Gastrocnemius medialis (tissue), 4 donors: ENCODE measurements at regions of chr12 and their contacts with region 1.

Region 1: DNA sequence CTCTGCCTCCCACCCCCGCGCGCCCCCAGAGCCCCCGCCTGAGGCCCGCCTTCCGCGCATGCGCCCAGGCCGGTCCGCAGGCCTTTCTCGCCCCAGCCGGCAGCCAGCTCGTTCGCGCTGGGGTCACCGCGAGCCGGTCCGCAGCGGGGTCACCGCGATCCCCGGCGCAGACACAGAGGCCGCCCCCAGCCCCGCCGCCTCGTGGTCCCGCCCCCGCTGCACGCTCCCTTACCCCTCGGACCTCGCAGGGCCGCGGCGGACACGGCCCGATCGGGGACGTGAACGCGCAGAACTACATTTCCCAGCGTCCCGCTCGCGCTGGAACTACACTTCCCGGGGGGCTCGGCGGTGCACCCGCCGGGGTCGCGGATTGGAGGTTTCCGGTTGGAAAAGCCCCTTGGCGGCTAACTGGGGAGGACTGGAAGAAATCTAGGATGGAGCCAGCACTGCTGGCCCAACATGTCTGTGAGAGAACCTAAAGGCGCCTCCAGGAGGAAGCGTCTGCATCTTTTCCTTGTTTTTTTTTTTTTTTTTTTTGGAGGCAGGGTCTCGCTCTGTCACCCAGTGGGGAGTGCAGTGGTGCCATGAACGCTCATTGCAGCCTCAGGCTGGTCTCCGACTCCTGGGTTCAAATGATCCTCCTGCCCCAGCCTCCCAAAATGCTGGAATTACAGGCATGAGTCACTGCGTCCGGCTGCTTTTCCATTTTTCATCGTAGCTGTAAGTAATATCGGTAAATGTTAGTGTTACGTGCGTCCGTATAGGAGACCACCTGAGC is at the start of gene ZNF605:
- DNase-seq: peak; percentile 70 to 78
- ATAC-seq: peak; percentile 94 to 97
- H3K4me3 ChIP-seq: peak within 1 kb of the TSS; percentile 85 to 99 (median 88)
- H3K27ac ChIP-seq: peak within 1 kb of the TSS; percentile 82 to 96 (median 94)
- H3K4me1 ChIP-seq: peaks cover 9 to 20% of the 10 kb centered on the region in 2 donors
- H3K27me3 ChIP-seq: no peaks in the 10 kb centered on the region
- CTCF ChIP-seq: no peak
- POLR2A ChIP-seq: peak in 1 of 2 donors; percentile 30
- total RNA-seq, gene ZNF605: 2.1 to 4.6 (median 2.2) TPM

Region 2: GRCh38 chr12:132828706-132829534 is 127.3 kb before region 1 on chr12 and contains the start of gene GOLGA3:
- in situ Hi-C with region 1: no loop called
- intact Hi-C with region 1: loop called (anchors 5 kb)
- DNase-seq: peak; percentile 85 to 88
- ATAC-seq: peak; percentile 97 to 98
- H3K4me3 ChIP-seq: peak within 1 kb of the TSS; percentile 78 to 87 (median 84)
- H3K27ac ChIP-seq: peak within 1 kb of the TSS; percentile 92 to 100 (median 97)
- H3K4me1 ChIP-seq: peaks cover 15 to 22% of the 10 kb centered on the region in 2 donors
- H3K27me3 ChIP-seq: no peaks in the 10 kb centered on the region
- CTCF ChIP-seq: peak in 1 of 5 experiments; percentile 20
- POLR2A ChIP-seq: peak; percentile 40 to 54
- total RNA-seq, gene GOLGA3: 30.0 to 50.0 (median 39.6) TPM

Region 3: GRCh38 chr12:132887513-132888351 is 68.5 kb before region 1 on chr12 and contains the start of gene CHFR:
- in situ Hi-C with region 1: no loop called
- intact Hi-C with region 1: loop called (anchors 5 kb)
- DNase-seq: peak; percentile 84 to 91
- ATAC-seq: peak; percentile 97
- H3K4me3 ChIP-seq: peak within 1 kb of the TSS; percentile 73 to 91 (median 84)
- H3K27ac ChIP-seq: peak within 1 kb of the TSS; percentile 85 to 93 (median 91)
- H3K4me1 ChIP-seq: peaks cover 4 to 7% of the 10 kb centered on the region in 2 donors
- H3K27me3 ChIP-seq: no peaks in the 10 kb centered on the region
- CTCF ChIP-seq: no peak
- POLR2A ChIP-seq: peak; percentile 44 to 54
- total RNA-seq, gene CHFR: 10.8 to 19.6 (median 12.1) TPM

Region 4: GRCh38 chr12:132986001-132986912 is 30.1 kb after region 1 on chr12 and contains the start of gene ZNF26:
- in situ Hi-C with region 1: no loop called
- intact Hi-C with region 1: loop called (anchors 1 kb)
- DNase-seq: peak; percentile 81 to 86
- ATAC-seq: peak; percentile 99 to 100
- H3K4me3 ChIP-seq: peak within 1 kb of the TSS; percentile 77 to 98 (median 88)
- H3K27ac ChIP-seq: peak within 1 kb of the TSS; percentile 86 to 88 (median 87)
- H3K4me1 ChIP-seq: peaks cover 12 to 13% of the 10 kb centered on the region in 2 donors
- H3K27me3 ChIP-seq: no peaks in the 10 kb centered on the region
- CTCF ChIP-seq: no peak
- POLR2A ChIP-seq: peak; percentile 30 to 50
- total RNA-seq, gene ZNF26: 1.2 to 12.3 (median 2.6) TPM

Region 5: GRCh38 chr12:133037207-133038005 is 81.2 kb after region 1 on chr12 and contains the start of gene ZNF84:
- in situ Hi-C with region 1: no loop called
- intact Hi-C with region 1: loop called (anchors 1 kb)
- DNase-seq: peak; percentile 93 to 94
- ATAC-seq: peak; percentile 96 to 99
- H3K4me3 ChIP-seq: peak within 1 kb of the TSS; percentile 74 to 90 (median 80)
- H3K27ac ChIP-seq: peak within 1 kb of the TSS; percentile 83 to 97 (median 91)
- H3K4me1 ChIP-seq: peaks cover 11 to 12% of the 10 kb centered on the region in 2 donors
- H3K27me3 ChIP-seq: no peaks in the 10 kb centered on the region
- CTCF ChIP-seq: peak in 2 of 5 experiments; percentile 23 to 47
- POLR2A ChIP-seq: peak; percentile 60 to 61
- total RNA-seq, gene ZNF84: 5.3 to 20.9 (median 13.5) TPM

Region 6: DNA sequence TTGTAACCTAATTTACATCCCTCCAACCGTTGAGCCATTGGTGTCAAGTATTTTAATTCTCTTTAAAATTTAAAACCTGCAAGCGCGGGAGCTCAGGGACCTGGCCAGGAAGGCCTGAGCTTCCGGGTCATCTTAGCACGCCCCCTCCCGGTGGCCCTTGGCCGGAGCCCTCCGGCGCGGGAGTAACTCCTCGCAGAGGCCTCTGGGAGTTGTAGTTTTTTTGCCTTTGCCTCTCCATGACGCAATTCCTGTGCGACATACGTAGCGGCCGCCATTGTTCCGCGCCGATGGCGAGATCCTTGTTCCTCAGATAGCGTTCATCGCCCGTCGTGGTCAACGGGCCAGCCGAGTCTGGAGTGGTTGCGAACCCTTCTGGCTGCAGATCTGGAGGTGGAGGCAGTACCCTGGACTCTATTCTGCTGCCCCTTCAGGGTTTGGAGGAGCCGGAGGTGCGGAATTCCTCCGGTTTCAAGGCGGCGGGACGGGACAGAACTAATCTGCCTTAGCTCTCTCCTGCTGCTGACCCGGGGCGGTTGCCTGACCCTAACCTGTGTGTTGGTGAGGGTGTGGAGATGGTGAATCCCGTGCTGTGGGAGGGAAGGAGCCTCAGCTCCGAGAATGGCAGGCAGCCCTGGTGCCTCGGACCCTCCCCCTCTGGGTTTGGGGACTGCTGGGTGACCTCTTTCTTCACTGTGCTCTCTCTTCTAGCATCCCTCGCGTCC is 225.2 kb after region 1 on chr12 and contains the start of gene ZNF268:
- in situ Hi-C with region 1: no loop called
- intact Hi-C with region 1: loop called (anchors 1 kb)
- DNase-seq: peak; percentile 68 to 83
- ATAC-seq: peak; percentile 90 to 100
- H3K4me3 ChIP-seq: peak within 1 kb of the TSS; percentile 65 to 91 (median 84)
- H3K27ac ChIP-seq: peak within 1 kb of the TSS; percentile 44 to 76 (median 62)
- H3K4me1 ChIP-seq: peaks cover 7 to 9% of the 10 kb centered on the region in 2 donors
- H3K27me3 ChIP-seq: no peaks in the 10 kb centered on the region
- CTCF ChIP-seq: peak; percentile 40 to 76 (median 75)
- POLR2A ChIP-seq: no peak
- total RNA-seq, gene ZNF268: 3.8 to 8.9 (median 4.3) TPM

Region 7: DNA sequence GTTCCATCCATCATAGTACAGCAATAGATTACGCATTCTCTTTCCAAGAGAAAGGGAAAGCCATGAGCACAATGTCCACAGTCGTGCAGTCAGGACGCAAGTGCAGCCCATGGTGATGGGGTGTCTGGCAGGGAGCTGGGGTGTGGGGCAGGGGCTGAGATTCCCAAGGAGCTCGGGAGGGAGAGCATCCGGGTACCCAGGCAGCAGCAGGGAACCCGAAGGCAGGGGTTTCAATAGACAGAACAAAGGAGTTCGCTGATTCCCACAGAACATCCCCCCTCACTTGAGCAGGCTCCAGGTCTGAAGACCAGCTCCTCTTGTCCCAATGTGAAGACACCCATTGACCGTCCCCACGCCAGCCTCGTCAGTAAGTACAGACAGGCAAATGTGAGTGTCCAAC is 266.0 kb after region 1 on chr12:
- in situ Hi-C with region 1: no loop called
- intact Hi-C with region 1: no loop called
- DNase-seq: no peak
- ATAC-seq: no peak
- H3K4me3 ChIP-seq: no peak overlapping the region
- H3K27ac ChIP-seq: no peak overlapping the region
- H3K4me1 ChIP-seq: no peaks in the 10 kb centered on the region
- H3K27me3 ChIP-seq: no peaks in the 10 kb centered on the region
- CTCF ChIP-seq: no peak
- POLR2A ChIP-seq: no peak